AG04449 (cell line): ENCODE measurements at regions of chr17 and their contacts with region 1.

Region 1: GRCh38 chr17:69607162-69607834 is 192.8 kb downstream of the MAP2K6 start:
- DNase-seq: peak; percentile 42
- H3K4me3 ChIP-seq: no peak overlapping the region
- CTCF ChIP-seq: peak; percentile 73

Region 2: GRCh38 chr17:69516911-69517310 is 90.4 kb before region 1 on chr17:
- CTCF ChIA-PET with region 1: no interaction called
- POLR2A ChIA-PET with region 1: no interaction called
- DNase-seq: no peak
- H3K4me3 ChIP-seq: no peak overlapping the region
- CTCF ChIP-seq: no peak

Region 3: GRCh38 chr17:69581061-69581961 is 26.0 kb before region 1 on chr17:
- CTCF ChIA-PET with region 1: interaction called, 17 read pairs
- POLR2A ChIA-PET with region 1: no interaction called
- DNase-seq: no peak
- H3K4me3 ChIP-seq: no peak overlapping the region
- CTCF ChIP-seq: no peak

Region 4: DNA sequence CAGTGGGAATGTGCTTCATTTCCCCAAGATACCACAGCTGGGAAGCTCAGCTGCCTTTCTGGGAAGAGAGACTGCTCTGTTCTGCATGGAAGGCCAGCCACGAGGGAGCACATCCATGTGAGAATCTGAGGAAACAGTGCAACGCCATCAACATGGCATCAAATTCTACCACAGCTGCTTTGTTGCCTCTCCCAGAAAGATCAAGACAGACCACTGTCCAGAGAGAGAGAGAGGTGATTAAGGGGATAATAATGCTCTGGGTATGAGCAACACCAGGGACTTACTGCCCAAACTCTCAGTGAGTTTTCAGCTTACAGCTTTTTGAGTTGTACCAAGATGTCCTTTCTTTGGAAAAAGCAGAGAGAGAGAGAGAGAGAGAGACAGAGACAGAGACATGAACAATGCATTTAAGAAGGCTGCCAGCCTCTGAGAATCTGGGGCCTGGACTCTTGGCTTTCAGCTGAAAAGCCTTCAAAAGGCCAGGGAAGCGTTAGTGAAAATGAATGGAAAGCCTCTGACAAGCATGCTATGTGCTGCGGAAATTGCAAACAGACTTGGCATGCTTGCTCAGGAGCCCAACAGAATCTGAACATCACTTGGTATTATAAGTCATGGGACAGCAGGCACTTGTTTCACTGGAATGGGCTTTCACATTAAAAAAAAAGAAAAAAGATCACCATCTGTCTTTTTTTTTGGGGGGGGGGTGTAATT is 30.3 kb after region 1 on chr17:
- CTCF ChIA-PET with region 1: interaction called, 17 read pairs
- POLR2A ChIA-PET with region 1: interaction called, 3 read pairs
- DNase-seq: peak; percentile 29
- H3K4me3 ChIP-seq: no peak overlapping the region
- CTCF ChIP-seq: no peak

Region 5: GRCh38 chr17:70137451-70138230 is 530.3 kb after region 1 on chr17:
- CTCF ChIA-PET with region 1: interaction called, 114 read pairs
- POLR2A ChIA-PET with region 1: no interaction called
- DNase-seq: peak; percentile 23
- H3K4me3 ChIP-seq: no peak overlapping the region; the same call in 1 of the 2 replicates
- CTCF ChIP-seq: no peak

Region 6: DNA sequence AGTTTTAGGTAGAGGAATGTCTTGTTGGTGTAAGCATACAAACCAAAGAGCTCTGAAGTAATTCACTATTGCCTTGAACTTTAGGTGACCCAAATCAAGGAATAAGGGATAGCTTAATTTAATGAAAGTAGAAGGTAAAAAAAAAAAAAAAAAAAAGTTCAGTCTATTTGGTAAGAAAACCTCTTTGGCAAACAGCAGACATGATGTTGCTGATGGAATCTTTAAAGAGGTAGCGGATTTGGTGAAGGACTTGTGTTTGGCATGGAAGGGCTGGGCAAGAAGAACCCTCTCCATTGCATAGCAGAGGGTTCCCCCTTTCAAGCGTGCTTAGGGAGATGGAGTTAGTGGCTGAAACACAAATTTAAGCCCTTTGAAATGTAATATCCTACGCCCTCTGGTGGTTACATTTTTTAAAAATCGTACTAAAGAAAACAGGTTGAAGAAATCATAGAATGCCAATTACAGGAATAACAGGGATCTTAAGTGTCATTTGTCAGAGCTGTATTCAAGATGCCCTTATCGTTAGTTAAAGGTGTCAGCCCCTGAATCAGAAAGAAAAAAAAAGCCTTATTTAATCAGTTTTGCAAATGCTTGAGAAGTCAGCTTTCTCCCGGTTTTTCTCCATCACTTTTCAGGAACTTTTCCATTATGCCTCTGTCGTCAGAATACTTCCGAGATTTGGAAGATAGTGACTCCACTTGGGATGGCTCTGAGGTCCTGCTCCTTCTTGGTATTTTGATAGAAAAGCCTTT is 945.1 kb after region 1 on chr17:
- CTCF ChIA-PET with region 1: interaction called, 12 read pairs
- POLR2A ChIA-PET with region 1: no interaction called
- DNase-seq: no peak
- H3K4me3 ChIP-seq: no peak overlapping the region
- CTCF ChIP-seq: no peak